Activated CD4-positive, alpha-beta T cell treated with anti-CD3 and anti-CD28 coated beads for 36 hours (primary cell): ENCODE measurements at regions of chr2 and their contacts with region 1.

Region 1: GRCh38 chr2:112542123-112542983 is at the start of gene POLR1B:
- DNase-seq: peak; percentile 87
- ATAC-seq: peak; percentile 85
- H3K4me3 Mint-ChIP-seq: no peak within 1 kb of the TSS
- H3K27ac Mint-ChIP-seq: no peak within 1 kb of the TSS
- H3K4me1 Mint-ChIP-seq: peaks cover 18% of the 10 kb centered on the region
- H3K27me3 Mint-ChIP-seq: no peaks in the 10 kb centered on the region
- total RNA-seq, gene POLR1B: 47.0 to 63.3 TPM

Region 2: DNA sequence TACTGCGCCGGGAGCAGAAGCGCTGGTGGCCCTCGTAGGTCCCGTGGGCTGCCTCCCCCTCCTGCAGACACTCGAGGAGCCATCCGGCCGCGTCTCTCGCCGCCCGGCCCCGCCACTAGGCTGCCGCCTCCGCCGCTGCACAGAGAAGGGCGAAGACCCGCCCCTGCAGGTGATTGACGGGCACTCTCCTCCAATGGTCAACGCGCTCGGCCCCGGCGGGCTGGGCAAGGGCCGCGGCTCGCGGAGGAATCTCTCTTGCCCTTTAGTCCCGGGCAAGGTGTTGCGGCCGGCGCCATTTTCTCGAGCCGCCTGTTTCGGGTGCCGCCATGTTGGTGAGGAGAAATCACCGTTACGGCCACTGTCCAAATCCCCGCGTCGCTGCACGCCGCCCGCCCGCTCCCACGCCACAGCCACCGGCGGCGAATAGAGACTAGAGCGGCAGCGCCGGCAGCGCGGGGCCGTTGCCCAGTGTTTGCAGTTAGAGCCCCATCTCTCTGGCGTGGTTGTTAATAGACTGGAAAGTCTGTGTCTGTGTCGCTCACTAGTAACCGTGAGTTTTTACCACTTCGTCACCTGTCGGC is 267.0 kb before region 1 on chr2 and contains the start of gene ZC3H6:
- CTCF ChIA-PET with region 1: no interaction called
- POLR2A ChIA-PET with region 1: no interaction called
- intact Hi-C with region 1: loop called (anchors 1 to 5 kb)
- DNase-seq: peak; percentile 100
- ATAC-seq: peak; percentile 98
- H3K4me3 Mint-ChIP-seq: peak within 1 kb of the TSS; percentile 90
- H3K27ac Mint-ChIP-seq: peak within 1 kb of the TSS; percentile 97
- H3K4me1 Mint-ChIP-seq: peaks cover 26% of the 10 kb centered on the region
- H3K27me3 Mint-ChIP-seq: no peaks in the 10 kb centered on the region
- total RNA-seq, gene ZC3H6: 15.1 to 15.3 TPM

Region 3: GRCh38 chr2:112764071-112765044 is 222.0 kb after region 1 on chr2 and contains the start of gene CKAP2L:
- CTCF ChIA-PET with region 1: interaction called, 4 read pairs
- POLR2A ChIA-PET with region 1: no interaction called
- intact Hi-C with region 1: loop called in 1 of 2 experiments (anchors 1 kb)
- DNase-seq: peak; percentile 98
- ATAC-seq: peak; percentile 97
- H3K4me3 Mint-ChIP-seq: peak within 1 kb of the TSS; percentile 96
- H3K27ac Mint-ChIP-seq: peak within 1 kb of the TSS; percentile 95
- H3K4me1 Mint-ChIP-seq: peaks cover 25% of the 10 kb centered on the region
- H3K27me3 Mint-ChIP-seq: no peaks in the 10 kb centered on the region
- total RNA-seq, gene CKAP2L: 38.4 to 46.7 TPM